ENCODE measurements at regions of chr16 and their contacts with region 1.

Region 1: GRCh38 chr16:2838928-2839327 is 8.8 kb downstream of the ZG16B start:
- DNase-seq: peak; percentile 86
- ATAC-seq: peak; percentile 94
- H3K4me3 Mint-ChIP-seq: peak overlapping the region; percentile 29; the same call in 1 of the 2 replicates
- H3K27ac Mint-ChIP-seq: no peak overlapping the region
- H3K4me1 Mint-ChIP-seq: peaks cover 14% of the 10 kb centered on the region
- H3K27me3 Mint-ChIP-seq: peaks cover 14% of the 10 kb centered on the region
- CTCF ChIP-seq: peak; percentile 85

Region 2: GRCh38 chr16:2795714-2796143 is 43.2 kb before region 1 on chr16:
- CTCF ChIA-PET with region 1: interaction called, 21 read pairs
- POLR2A ChIA-PET with region 1: no interaction called
- DNase-seq: no peak
- ATAC-seq: no peak
- H3K4me3 Mint-ChIP-seq: no peak overlapping the region
- H3K27ac Mint-ChIP-seq: no peak overlapping the region
- H3K4me1 Mint-ChIP-seq: no peaks in the 10 kb centered on the region
- H3K27me3 Mint-ChIP-seq: peaks cover 15% of the 10 kb centered on the region; the same call in 1 of the 2 replicates
- CTCF ChIP-seq: no peak

Region 3: GRCh38 chr16:2848933-2849725 is 10.2 kb after region 1 on chr16:
- CTCF ChIA-PET with region 1: interaction called, 27 read pairs
- POLR2A ChIA-PET with region 1: no interaction called
- DNase-seq: no peak
- ATAC-seq: no peak
- H3K4me3 Mint-ChIP-seq: no peak overlapping the region
- H3K27ac Mint-ChIP-seq: no peak overlapping the region
- H3K4me1 Mint-ChIP-seq: peaks cover 6% of the 10 kb centered on the region
- H3K27me3 Mint-ChIP-seq: peaks cover 35% of the 10 kb centered on the region
- CTCF ChIP-seq: no peak

Region 4: DNA sequence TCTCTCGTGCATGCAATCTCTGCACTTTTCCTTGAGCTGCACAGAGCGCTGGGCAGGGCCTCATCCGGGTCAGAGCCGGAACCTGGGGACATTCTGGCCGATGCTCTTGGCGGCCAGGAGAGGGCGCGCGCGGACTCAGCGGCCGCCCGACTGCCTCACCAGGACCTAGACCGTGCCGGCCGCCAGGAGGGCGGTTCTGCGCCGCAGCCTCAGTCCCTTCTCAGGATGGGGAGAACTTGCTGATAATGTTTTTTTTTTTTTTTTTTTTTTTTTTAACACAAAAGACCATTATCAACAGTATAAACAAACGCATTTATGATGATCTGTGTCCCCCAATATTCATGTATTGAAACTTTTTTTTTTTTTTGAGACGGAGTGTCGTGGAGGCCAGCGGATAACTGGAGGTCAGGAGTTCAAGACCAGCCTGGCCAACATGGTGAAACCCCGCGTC is 36.0 kb after region 1 on chr16:
- CTCF ChIA-PET with region 1: interaction called, 99 read pairs
- POLR2A ChIA-PET with region 1: no interaction called
- DNase-seq: peak; percentile 76
- ATAC-seq: peak; percentile 99
- H3K4me3 Mint-ChIP-seq: no peak overlapping the region
- H3K27ac Mint-ChIP-seq: no peak overlapping the region
- H3K4me1 Mint-ChIP-seq: peaks cover 11% of the 10 kb centered on the region
- H3K27me3 Mint-ChIP-seq: peaks cover 49% of the 10 kb centered on the region
- CTCF ChIP-seq: peak; percentile 75

Region 5: DNA sequence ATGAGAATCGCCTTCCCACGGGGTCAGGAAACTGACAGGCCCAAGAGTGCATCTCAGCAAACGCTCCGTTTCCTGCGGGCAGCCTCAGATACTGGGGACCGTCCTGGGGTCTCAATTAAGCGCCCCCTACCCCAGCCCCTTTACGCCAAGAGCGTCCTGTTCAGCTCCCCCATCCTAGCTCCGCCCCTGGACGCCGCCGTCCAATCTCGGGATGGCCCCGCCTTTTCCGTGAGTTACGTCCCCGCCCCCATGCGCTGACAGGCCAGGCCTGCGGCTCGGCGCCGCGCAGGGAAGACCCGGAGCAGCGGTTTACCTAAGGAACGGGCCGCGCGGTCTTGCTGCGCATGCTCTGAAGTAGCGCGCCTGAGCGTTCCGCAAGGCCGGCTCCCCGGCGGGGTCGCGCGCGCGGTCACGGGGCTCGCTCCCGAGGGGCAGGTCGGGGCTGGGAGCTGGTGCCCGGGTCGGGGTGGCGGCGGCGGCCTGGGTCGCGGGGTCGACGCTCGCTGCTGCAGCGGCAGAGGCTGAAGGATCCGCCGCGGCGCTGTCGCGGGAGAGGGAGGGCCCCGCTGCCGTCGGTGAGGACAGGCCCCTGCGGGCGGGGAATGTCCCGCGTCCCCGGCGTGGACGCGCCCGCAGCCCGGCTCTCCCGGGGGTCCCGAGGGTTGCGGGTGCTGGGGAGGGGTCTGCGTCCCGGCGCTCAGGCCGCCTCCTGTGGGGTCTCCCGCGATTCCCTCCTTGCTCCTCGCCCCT is 72.8 kb after region 1 on chr16 and contains the start of gene FLYWCH1:
- CTCF ChIA-PET with region 1: interaction called, 31 read pairs
- POLR2A ChIA-PET with region 1: no interaction called
- DNase-seq: peak; percentile 99
- ATAC-seq: peak; percentile 98
- H3K4me3 Mint-ChIP-seq: peak within 1 kb of the TSS; percentile 86
- H3K27ac Mint-ChIP-seq: peak within 1 kb of the TSS; percentile 83
- H3K4me1 Mint-ChIP-seq: peaks cover 14% of the 10 kb centered on the region
- H3K27me3 Mint-ChIP-seq: peaks cover 37% of the 10 kb centered on the region
- CTCF ChIP-seq: no peak
- total RNA-seq, gene FLYWCH1: 27.2 to 34.2 TPM (median 32.6 TPM) in 3 replicates

Region 6: DNA sequence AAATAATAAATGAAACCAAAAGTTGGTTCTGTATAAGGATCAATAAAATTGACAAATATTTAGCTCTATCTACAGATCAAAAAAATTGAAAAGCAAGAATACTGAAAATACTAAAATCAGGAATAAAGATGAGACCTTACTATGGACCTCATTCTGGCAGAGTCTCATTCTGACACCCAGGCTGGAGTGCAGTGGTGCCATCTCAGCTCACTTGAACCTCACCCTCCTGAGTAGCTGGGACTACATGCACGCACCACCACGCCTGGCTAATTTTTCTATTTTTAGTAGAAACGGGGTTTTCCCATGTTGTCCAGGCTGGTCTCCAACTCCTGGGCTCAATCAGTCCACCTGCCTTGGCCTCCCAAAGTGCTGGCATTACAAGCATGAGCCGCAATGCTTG is 103.1 kb after region 1 on chr16:
- CTCF ChIA-PET with region 1: no interaction called
- POLR2A ChIA-PET with region 1: no interaction called
- DNase-seq: no peak
- ATAC-seq: no peak
- H3K4me3 Mint-ChIP-seq: no peak overlapping the region
- H3K27ac Mint-ChIP-seq: no peak overlapping the region
- H3K4me1 Mint-ChIP-seq: no peaks in the 10 kb centered on the region
- H3K27me3 Mint-ChIP-seq: no peaks in the 10 kb centered on the region
- CTCF ChIP-seq: no peak

Region 7: DNA sequence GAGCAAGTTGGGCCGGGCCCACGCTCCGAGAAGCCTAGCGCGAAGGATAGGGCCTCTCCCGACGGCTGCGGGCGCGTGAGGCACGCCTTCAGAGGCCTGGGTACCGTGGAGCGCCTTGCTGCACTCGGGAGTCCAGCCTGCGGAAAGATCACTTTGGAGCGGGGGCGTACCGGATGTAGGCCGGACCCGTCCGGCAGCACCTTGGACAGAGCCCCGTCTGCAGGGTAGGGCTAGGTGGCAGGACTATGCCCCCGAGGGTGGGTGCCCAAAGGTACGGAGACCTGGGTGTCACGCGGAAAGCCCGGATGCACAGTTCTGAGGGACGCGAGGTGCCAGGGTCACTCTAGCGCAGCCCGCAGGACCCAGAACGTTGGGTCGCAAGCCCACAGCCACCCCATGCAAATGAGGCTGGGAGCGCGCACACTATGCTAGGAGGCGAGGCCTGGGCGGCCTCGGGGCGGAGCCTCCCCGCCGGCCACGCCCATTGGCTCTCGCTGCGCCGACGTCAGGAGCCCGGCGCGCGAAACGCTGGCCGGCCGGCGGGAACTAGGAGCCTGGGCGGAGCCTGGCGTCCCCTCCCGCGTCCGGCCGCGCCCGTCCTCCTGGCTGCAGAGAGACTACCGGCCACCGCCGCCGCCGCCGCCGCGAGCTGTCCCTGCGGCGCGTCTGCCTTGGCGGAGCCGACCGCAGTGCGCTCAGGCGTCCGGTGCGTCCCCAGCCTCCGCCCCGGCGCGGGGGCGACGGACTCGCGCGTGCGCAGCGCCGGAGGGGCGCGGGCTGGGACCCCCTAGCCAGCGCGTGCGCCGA is 130.0 kb after region 1 on chr16 and contains the start of gene PAQR4:
- CTCF ChIA-PET with region 1: interaction called, 16 read pairs
- POLR2A ChIA-PET with region 1: interaction called, 3 read pairs
- DNase-seq: peak; percentile 89
- ATAC-seq: peak; percentile 62
- H3K4me3 Mint-ChIP-seq: peak within 1 kb of the TSS; percentile 66
- H3K27ac Mint-ChIP-seq: no peak within 1 kb of the TSS
- H3K4me1 Mint-ChIP-seq: peaks cover 27% of the 10 kb centered on the region
- H3K27me3 Mint-ChIP-seq: peaks cover 33% of the 10 kb centered on the region
- CTCF ChIP-seq: no peak
- total RNA-seq, gene PAQR4: 21.1 to 32.4 TPM (median 21.5 TPM) in 3 replicates